HepG2 (cell line): ENCODE measurements at regions of chr4 and their contacts with region 1.

Region 1: DNA sequence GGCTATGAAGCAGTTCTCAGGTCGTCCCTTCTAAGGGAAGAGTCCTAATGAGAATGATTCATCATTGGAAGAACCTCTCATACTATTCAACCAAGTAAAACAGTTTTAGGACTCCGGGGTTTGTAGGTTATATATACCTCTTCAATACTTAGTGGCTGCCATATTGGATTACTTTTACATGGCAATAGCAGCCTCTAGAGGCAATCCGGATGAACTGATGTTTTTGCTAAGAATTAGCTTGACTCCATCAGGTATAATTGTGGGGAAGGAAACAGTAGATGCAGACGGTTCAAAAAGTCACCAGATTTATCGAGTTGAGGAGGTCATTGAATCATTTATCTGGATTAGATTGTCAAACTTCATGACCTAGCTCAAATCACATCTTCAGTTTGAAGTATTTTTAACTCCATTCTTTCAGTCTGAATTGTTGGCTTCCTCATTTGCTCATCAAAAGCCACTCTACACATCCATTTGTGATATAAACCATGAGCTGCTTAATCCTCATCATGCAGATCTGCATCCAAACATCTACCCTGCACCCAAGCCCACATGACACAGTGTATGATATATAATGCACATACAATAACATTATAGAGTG is 28.4 kb downstream of the GUCY1B1 start:
- DNase-seq: peak; percentile 28
- ATAC-seq: peak; percentile 87
- H3K4me3 ChIP-seq: no peak overlapping the region
- H3K27ac ChIP-seq: no peak overlapping the region
- H3K4me1 ChIP-seq: no peaks in the 10 kb centered on the region
- H3K27me3 ChIP-seq: no peaks in the 10 kb centered on the region
- CTCF ChIP-seq: peak; percentile 56
- EP300 ChIP-seq: no peak
- POLR2A ChIP-seq: no peak
- RAD21 ChIP-seq: 0 out of 2 replicates have a peak, but pooled peaks have one; percentile 22

Region 2: GRCh38 chr4:154807042-154807630 is 980.1 kb before region 1 on chr4:
- CTCF ChIA-PET with region 1: interaction called, 4 read pairs
- POLR2A ChIA-PET with region 1: no interaction called
- in situ Hi-C with region 1: no loop called
- intact Hi-C with region 1: loop called (anchors 5 kb)
- DNase-seq: peak; percentile 4
- ATAC-seq: no peak
- H3K4me3 ChIP-seq: no peak overlapping the region
- H3K27ac ChIP-seq: no peak overlapping the region
- H3K4me1 ChIP-seq: no peaks in the 10 kb centered on the region
- H3K27me3 ChIP-seq: no peaks in the 10 kb centered on the region
- CTCF ChIP-seq: peak; percentile 45
- EP300 ChIP-seq: no peak
- POLR2A ChIP-seq: no peak
- RAD21 ChIP-seq: no peak

Region 3: GRCh38 chr4:155047755-155048154 is 739.5 kb before region 1 on chr4:
- CTCF ChIA-PET with region 1: no interaction called
- POLR2A ChIA-PET with region 1: no interaction called
- in situ Hi-C with region 1: no loop called
- intact Hi-C with region 1: no loop called
- DNase-seq: no peak
- ATAC-seq: no peak
- H3K4me3 ChIP-seq: no peak overlapping the region
- H3K27ac ChIP-seq: no peak overlapping the region
- H3K4me1 ChIP-seq: no peaks in the 10 kb centered on the region
- H3K27me3 ChIP-seq: no peaks in the 10 kb centered on the region
- CTCF ChIP-seq: no peak
- EP300 ChIP-seq: no peak
- POLR2A ChIP-seq: no peak
- RAD21 ChIP-seq: no peak

Region 4: GRCh38 chr4:155442267-155443105 is 344.7 kb before region 1 on chr4:
- CTCF ChIA-PET with region 1: interaction called, 24 read pairs
- POLR2A ChIA-PET with region 1: no interaction called
- in situ Hi-C with region 1: loop called (anchors 25 kb)
- intact Hi-C with region 1: loop called (anchors 1 kb)
- DNase-seq: peak; percentile 32
- ATAC-seq: peak; percentile 92
- H3K4me3 ChIP-seq: no peak overlapping the region
- H3K27ac ChIP-seq: no peak overlapping the region
- H3K4me1 ChIP-seq: no peaks in the 10 kb centered on the region
- H3K27me3 ChIP-seq: no peaks in the 10 kb centered on the region
- CTCF ChIP-seq: peak; percentile 79
- EP300 ChIP-seq: no peak
- POLR2A ChIP-seq: no peak
- RAD21 ChIP-seq: no peak

Region 5: GRCh38 chr4:155615081-155615887 is 171.9 kb before region 1 on chr4:
- CTCF ChIA-PET with region 1: no interaction called
- POLR2A ChIA-PET with region 1: no interaction called
- in situ Hi-C with region 1: no loop called
- intact Hi-C with region 1: no loop called
- DNase-seq: no peak
- ATAC-seq: no peak
- H3K4me3 ChIP-seq: no peak overlapping the region
- H3K27ac ChIP-seq: no peak overlapping the region
- H3K4me1 ChIP-seq: no peaks in the 10 kb centered on the region
- H3K27me3 ChIP-seq: no peaks in the 10 kb centered on the region
- CTCF ChIP-seq: no peak
- EP300 ChIP-seq: no peak
- POLR2A ChIP-seq: no peak
- RAD21 ChIP-seq: no peak

Region 6: DNA sequence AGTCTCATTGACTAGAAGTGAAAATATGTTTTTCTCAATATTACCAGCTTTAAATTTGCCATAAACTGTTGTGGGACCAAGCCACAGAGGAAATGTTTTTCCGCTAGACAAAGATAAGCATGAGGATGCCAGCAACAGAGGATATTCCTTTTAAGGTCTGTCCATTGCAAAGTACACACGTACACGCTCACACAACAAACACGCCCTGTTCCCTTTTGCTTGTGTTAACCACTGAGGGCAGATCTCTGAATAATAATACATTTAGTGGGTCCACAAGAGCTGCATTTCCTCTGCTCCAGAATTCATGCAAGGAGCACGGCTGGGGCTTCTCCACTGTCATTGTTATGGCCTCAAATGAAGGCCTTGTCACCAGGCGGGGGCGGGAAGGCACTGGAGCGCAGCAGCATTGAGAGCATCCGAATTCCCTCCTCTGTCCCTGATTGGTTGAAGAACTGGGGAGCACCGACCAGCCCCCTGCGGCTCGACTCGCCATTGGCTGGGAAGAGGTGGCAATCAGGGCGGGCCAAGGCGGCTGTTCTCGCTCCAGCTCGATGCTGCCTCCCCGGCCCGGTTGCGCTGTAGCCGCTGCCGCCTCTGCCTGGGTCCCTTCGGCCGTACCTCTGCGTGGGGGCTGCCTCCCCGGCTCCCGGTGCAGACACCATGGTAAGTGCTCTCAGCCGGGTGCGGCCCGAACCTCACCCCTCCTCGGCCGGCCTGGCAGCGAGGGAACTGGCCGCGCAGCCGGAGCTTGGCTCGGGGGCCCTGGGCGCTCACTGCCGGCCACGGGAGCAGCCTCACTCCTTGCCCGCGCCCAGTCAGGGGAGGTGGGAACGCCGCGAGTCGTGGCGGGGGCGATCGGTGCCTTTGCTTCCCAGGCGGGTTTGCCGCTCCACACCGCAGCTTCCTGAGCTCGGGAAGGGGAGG is 28.5 kb before region 1 on chr4 and contains the start of gene GUCY1B1:
- CTCF ChIA-PET with region 1: no interaction called
- POLR2A ChIA-PET with region 1: no interaction called
- in situ Hi-C with region 1: no loop called
- intact Hi-C with region 1: no loop called
- DNase-seq: no peak
- ATAC-seq: peak; percentile 29; the same call in 2 of the 3 replicates
- H3K4me3 ChIP-seq: no peak within 1 kb of the TSS
- H3K27ac ChIP-seq: no peak within 1 kb of the TSS
- H3K4me1 ChIP-seq: no peaks in the 10 kb centered on the region
- H3K27me3 ChIP-seq: no peaks in the 10 kb centered on the region
- CTCF ChIP-seq: no peak
- EP300 ChIP-seq: no peak
- POLR2A ChIP-seq: no peak
- RAD21 ChIP-seq: no peak
- total RNA-seq, gene GUCY1B1: not detected in 2 replicates